ENCODE measurements at regions of chr5 and their contacts with region 1.

Region 1: DNA sequence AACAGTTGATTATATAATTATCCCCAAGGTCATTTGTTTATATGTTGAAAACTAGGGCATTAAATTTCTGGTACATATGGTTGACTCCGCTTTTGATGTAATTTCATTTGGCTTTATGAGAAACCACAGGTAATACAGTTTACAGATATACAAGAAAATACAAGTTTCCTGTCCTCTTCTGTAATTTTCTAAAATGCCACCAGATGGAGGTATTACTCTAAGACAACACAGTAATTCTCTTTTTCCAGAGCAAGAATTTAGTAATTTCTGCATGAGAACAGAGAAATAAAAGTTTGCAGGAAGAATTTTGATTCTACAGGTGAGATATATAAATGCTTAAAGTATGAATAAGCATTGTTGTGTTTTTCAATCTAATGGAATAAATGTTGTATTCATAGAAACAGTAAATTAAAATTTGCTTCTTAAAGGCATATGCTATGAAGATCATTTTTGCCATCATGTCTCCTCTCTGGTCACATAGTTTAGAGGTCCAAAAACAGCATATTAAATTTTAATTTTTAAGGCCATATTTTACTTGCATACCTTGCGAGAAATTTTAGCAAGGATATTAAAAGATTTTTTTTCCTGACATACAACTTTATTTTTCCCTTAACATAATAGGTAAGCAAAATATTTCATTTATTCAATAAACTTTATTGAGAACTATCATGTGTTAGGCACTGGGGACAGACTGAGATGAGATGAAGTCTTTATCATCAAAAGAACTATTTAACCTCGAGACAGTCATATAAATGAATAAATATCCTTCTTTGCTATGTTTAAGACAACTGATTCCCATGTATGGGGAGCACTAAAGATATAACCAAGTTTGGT is 22.7 kb downstream of the CHD1 start:
- DNase-seq: no peak

Region 2: GRCh38 chr5:98443881-98444280 is 462.2 kb before region 1 on chr5:
- intact Hi-C with region 1: no loop called
- DNase-seq: no peak

Region 3: GRCh38 chr5:98468188-98468869 is 437.7 kb before region 1 on chr5:
- intact Hi-C with region 1: no loop called
- DNase-seq: no peak

Region 4: DNA sequence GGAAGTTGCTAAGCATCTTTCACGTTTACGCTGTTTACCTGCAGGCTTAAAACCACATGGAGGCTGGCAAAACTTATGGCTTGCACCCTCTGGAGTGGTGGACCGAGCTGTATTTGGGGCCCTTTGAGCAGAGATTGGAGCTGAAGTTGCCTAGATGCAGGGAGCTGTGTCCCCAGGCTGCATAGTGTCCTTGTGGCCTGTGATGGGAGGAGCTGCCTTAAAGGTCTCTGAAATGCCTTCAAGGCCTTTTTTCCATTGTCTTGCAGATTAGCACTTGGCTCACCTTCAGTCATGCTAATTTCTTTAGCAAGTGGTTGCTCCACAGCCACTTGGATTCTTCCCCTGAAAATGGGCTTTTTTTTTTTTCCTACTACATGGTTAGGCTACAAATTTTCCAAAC is 104.2 kb after region 1 on chr5:
- intact Hi-C with region 1: no loop called
- DNase-seq: no peak

Region 5: DNA sequence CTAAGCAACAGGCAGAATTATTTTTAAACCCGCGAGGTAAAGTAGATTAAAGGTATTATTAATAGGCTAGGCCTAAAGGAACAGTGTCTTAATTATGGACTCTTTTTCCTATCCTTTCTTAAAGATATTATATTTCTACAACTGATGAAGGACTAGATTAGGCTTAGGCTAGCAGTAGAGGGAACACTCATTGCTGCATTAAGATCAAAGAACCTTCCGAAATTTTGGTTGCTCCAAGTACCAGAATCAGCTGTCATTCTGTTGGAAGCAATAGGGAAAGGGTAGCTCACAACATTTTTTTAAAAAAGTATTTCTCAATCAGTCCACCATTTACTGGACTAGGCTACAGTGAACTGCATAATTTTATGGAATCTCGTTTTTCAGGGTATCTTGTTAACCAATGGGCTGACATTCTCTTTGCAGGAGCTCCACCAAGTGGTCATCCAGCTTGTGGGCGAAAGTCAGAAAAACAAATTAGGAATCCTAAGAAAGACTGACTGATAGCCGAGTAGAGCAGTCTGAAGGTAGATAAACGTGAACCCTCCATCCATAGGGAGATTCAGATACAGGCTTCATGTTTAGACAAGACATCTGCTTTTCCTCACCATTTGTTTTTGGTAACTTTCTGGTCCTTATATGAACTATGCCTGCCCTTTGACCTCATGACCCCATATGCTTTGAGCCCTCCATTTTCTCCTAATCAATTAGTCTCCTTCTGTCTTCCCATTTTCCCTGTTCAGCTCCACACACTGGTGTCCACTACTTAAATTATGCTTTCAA is 126.3 kb after region 1 on chr5:
- intact Hi-C with region 1: loop called (anchors 2 kb)
- DNase-seq: no peak

Region 6: GRCh38 chr5:99060306-99061261 is 154.5 kb after region 1 on chr5:
- intact Hi-C with region 1: loop called (anchors 2 kb)
- DNase-seq: peak; percentile 81

Region 7: DNA sequence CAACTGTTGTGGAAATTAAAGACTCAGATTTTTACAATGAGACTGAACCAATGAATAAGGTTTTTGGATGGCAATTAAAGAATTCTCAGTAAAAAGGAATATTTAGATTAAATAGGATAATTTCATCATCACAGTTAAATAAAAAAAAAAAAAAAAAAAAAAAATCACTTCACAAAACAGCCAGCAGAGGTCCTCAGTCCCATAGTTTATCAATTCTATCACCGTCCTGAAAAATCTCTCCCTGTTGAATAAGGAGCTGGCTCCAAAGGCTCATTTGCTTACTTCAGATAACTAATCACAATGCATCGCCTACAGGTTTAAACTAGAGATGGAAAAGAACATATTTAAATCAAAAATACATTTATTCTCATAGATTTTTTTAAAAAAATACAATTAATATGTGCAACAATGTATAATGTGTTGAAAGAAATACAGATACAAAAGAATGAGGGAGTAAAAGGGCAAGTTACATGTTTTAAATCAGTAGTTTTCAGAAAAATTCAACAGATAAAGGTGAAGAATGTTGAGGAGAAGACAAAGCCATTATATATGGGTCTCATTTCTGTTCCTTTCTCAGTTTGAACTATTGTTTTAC is 198.6 kb after region 1 on chr5:
- intact Hi-C with region 1: no loop called
- DNase-seq: no peak